Heart left ventricle (tissue), 16 donors: ENCODE measurements at regions of chr22 and their contacts with region 1.

Region 1: GRCh38 chr22:43385770-43386641 is 25.8 kb upstream of the MPPED1 start:
- DNase-seq: peak; percentile 67 to 90 (median 76)
- ATAC-seq: peak; percentile 59 to 93 (median 92)
- H3K4me3 ChIP-seq: no peak overlapping the region
- H3K27ac ChIP-seq: no peak overlapping the region
- H3K4me1 ChIP-seq: peaks cover 0 to 7% (median 0%) of the 10 kb centered on the region in 12 donors
- H3K27me3 ChIP-seq: peaks cover 0 to 49% (median 20%) of the 10 kb centered on the region in 9 donors
- CTCF ChIP-seq: peak in 11 of 12 donors; percentile 78 to 95 (median 91)
- POLR2A ChIP-seq: no peak

Region 2: DNA sequence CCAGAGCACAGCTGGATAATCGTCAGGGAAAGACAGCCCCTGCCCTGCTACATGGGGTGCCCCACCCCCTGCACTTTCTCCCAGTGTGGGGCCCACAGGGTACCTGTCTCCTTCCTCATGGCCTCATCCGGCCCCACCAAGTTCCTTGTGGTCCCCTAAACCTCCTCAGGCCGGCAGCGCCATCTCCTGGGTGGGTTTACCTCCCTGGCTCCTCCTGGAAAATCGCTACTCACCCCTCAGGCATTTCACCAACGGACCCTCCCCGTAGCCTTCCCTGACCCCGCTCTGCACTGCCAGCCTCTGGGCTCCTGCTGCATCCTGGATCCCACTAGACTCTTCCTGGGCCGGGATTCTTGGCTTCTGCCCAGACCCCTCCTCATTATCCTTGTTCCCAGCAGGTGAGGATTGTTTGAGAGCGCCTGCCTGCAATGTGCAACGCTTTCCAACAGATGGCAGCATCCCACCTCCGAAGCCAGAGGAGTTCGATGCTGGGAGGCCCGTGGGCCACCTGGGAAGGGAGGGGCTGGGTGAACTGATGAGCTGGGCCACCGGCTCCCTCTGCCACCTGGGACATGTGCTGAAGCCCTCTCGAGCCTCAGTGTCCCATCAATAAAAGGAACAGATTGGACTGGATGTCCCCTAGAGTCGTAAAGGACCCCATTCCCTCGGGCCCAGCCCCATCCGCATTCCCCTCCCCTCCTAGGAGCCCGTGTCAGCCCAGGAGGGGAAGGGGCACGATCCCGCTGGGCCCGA is 154.9 kb before region 1 on chr22:
- intact Hi-C with region 1: loop called (anchors 1 to 10 kb)
- DNase-seq: peak; percentile 43 to 78 (median 50)
- ATAC-seq: peak in 3 of 4 donors; percentile 18 to 39 (median 29)
- H3K4me3 ChIP-seq: no peak overlapping the region
- H3K27ac ChIP-seq: no peak overlapping the region
- H3K4me1 ChIP-seq: peaks cover 0 to 13% (median 1%) of the 10 kb centered on the region in 12 donors
- H3K27me3 ChIP-seq: peaks cover 0 to 10% (median 0%) of the 10 kb centered on the region in 9 donors
- CTCF ChIP-seq: peak; percentile 80 to 95 (median 90)
- POLR2A ChIP-seq: no peak

Region 3: DNA sequence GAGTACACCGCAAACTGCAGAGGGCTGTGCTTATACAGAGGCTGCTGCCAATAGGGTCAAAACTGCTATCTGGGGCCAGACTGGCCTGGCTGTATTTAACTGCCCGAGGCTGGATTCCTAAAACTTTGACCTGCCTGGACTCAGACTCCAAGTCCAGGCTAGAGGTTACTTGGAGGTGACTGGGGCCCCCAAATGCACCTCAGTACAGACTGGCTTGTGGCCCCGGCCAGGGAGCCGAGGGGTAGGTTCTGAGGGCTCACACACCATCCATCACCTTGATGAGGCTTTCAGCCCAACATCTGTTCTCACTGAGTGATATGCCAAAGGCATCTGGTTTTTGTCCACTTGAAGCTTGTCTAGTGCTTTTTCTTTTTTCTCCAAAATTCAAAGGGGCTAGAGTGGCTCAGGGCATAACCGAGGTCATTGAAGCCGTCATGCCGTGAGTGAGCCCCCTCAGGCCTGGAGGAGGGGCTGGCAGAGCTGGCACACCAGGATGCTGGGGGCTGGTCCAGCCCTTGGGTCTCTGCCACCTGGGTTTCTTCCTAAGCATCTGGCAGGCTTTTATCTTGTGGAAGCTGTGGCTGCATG is 146.7 kb before region 1 on chr22:
- intact Hi-C with region 1: loop called in 4 of 10 experiments (anchors 2 to 10 kb)
- DNase-seq: peak in 3 of 5 donors; percentile 28 to 54 (median 30)
- ATAC-seq: peak in 1 of 4 donors; percentile 11
- H3K4me3 ChIP-seq: no peak overlapping the region
- H3K27ac ChIP-seq: no peak overlapping the region
- H3K4me1 ChIP-seq: peaks cover 0 to 43% (median 15%) of the 10 kb centered on the region in 12 donors
- H3K27me3 ChIP-seq: peaks cover 0 to 8% (median 0%) of the 10 kb centered on the region in 9 donors
- CTCF ChIP-seq: no peak
- POLR2A ChIP-seq: no peak

Region 4: DNA sequence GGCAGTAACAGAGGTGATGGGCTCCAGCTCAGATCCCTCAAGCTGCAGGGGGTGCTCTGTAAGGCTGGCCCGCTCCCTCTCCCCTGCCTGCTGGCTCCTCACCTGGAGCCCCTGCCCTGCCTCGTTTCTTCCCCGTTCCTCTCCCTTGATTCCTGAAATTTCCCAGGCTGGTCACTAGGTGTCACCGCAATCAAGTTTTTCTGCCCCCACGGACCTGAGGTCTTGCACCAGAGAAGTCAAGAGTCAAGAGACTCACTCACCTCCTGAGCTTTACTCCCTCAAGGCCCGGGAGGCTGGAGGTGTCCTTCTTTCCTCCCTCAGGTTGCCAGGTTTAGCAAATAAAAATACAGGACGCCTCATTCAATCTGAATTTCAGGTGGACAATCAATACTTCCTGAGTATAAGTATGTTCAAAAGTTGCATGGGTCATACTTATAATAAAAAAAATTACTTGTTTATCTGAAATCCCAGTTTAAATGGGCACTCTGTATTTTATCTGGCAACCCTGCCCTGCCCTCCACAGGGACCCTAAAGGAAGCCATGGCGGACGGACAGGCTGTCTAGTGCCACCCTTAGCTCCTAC is 112.0 kb before region 1 on chr22:
- intact Hi-C with region 1: loop called (anchors 1 to 5 kb)
- DNase-seq: peak in 2 of 5 donors; percentile 30 to 43
- ATAC-seq: peak; percentile 32 to 74 (median 58)
- H3K4me3 ChIP-seq: no peak overlapping the region
- H3K27ac ChIP-seq: no peak overlapping the region
- H3K4me1 ChIP-seq: no peaks in the 10 kb centered on the region
- H3K27me3 ChIP-seq: peaks cover 0 to 26% (median 0%) of the 10 kb centered on the region in 9 donors
- CTCF ChIP-seq: peak; percentile 45 to 81 (median 70)
- POLR2A ChIP-seq: no peak

Region 5: DNA sequence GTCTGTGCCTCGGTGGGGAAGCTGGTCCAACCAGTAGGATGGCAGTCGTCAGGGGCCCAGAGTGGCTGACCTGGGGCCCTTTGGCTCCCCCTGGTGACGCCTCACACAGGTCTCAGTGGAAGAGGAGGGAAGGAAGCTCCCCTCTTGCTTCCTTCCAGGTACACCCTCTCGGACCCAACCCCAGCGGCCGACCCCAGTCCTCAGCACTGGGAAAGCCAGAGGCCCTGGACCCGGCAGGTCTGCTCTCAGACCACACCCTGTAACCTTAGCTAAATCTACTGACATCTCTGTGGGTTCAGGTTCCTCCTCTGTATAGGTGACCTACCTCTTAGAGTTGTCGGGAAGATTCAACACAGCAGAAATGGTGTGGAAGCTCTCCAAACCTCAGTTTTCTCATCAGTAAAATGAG is 39.5 kb before region 1 on chr22:
- intact Hi-C with region 1: no loop called
- DNase-seq: peak in 4 of 5 donors; percentile 41 to 80 (median 60)
- ATAC-seq: peak; percentile 65 to 85 (median 71)
- H3K4me3 ChIP-seq: no peak overlapping the region
- H3K27ac ChIP-seq: no peak overlapping the region
- H3K4me1 ChIP-seq: peaks cover 0 to 21% (median 0%) of the 10 kb centered on the region in 12 donors
- H3K27me3 ChIP-seq: peaks cover 22 to 80% (median 43%) of the 10 kb centered on the region in 9 donors
- CTCF ChIP-seq: peak; percentile 61 to 88 (median 72)
- POLR2A ChIP-seq: no peak

Region 6: DNA sequence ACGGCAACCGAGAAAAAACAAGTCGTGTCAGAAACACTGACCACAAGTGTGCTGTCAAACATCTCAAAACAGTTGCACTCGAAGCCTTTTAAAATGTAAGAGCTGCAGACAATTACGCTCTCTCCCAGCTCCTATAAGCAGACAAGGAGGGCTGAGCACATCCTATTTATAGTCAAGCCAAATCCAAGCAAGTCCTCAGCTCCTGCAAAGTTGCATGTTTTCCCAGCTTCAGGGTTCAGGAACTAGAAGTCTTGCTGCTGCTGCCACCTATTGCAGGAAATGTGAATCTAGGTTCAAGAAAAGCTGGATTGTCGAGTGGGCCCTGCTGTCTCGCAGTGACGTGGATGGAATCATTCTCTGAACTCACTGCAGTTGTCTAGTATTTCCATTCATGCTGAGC is 410.6 kb after region 1 on chr22:
- intact Hi-C with region 1: loop called in 7 of 10 experiments (anchors 1 to 10 kb)
- DNase-seq: no peak
- ATAC-seq: peak; percentile 55 to 77 (median 73)
- H3K4me3 ChIP-seq: no peak overlapping the region
- H3K27ac ChIP-seq: no peak overlapping the region
- H3K4me1 ChIP-seq: peaks cover 0 to 8% (median 0%) of the 10 kb centered on the region in 12 donors
- H3K27me3 ChIP-seq: no peaks in the 10 kb centered on the region
- CTCF ChIP-seq: peak in 10 of 12 donors; percentile 19 to 53 (median 40)
- POLR2A ChIP-seq: no peak

Region 7: GRCh38 chr22:43826142-43827002 is 440.4 kb after region 1 on chr22:
- intact Hi-C with region 1: loop called in 6 of 10 experiments (anchors 2 to 10 kb)
- DNase-seq: peak in 1 of 5 donors; percentile 25
- ATAC-seq: no peak
- H3K4me3 ChIP-seq: no peak overlapping the region
- H3K27ac ChIP-seq: peak overlapping the region in 1 of 12 donors; percentile 1
- H3K4me1 ChIP-seq: peaks cover 0 to 28% (median 18%) of the 10 kb centered on the region in 12 donors
- H3K27me3 ChIP-seq: peaks cover 0 to 22% (median 0%) of the 10 kb centered on the region in 9 donors
- CTCF ChIP-seq: peak in 8 of 12 donors; percentile 7 to 41 (median 27)
- POLR2A ChIP-seq: no peak

Region 8: GRCh38 chr22:43884600-43885325 is 498.8 kb after region 1 on chr22:
- intact Hi-C with region 1: loop called in 4 of 10 experiments (anchors 2 to 10 kb)
- DNase-seq: peak; percentile 35 to 78 (median 58)
- ATAC-seq: peak in 3 of 4 donors; percentile 54 to 62 (median 59)
- H3K4me3 ChIP-seq: no peak overlapping the region
- H3K27ac ChIP-seq: no peak overlapping the region
- H3K4me1 ChIP-seq: no peaks in the 10 kb centered on the region
- H3K27me3 ChIP-seq: peaks cover 2 to 51% (median 13%) of the 10 kb centered on the region in 9 donors
- CTCF ChIP-seq: peak; percentile 54 to 83 (median 76)
- POLR2A ChIP-seq: no peak